ENCODE measurements at regions of chr9 and their contacts with region 1.

Region 1: DNA sequence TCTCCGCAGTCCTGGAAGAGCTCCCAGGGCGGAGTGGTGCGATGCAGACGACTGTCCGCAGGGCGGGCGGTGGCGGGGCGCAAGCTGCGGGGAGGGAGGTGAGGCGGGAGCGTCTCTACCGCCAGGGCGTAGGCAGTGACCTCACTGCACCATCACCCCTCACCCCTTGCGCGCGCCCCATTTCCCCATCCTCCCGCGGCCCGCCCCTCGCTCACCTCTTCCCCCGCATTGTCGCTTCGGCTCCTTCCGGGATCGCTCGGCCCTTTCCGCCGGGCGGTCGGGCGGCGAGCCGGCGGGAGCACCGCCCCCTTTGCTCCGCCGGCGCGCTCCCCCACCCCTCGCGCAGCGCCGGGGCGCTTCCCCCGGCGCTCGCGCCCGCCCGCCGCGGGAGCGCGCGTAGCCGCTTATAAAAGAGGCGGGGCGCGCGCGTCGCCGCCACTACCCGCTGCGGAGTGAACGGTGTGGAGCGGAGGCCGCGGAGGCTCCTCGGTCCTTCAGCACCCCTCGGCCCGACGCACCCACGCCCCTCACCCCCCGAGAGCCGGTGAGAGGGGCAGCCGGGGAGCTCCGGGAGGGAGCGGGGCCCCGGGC is at the start of gene SPTAN1:
- DNase-seq: peak; percentile 96
- ATAC-seq: peak; percentile 81
- H3K4me3 Mint-ChIP-seq: peak within 1 kb of the TSS; percentile 94
- H3K27ac Mint-ChIP-seq: peak within 1 kb of the TSS; percentile 94
- H3K4me1 Mint-ChIP-seq: peaks cover 20% of the 10 kb centered on the region
- H3K27me3 Mint-ChIP-seq: no peaks in the 10 kb centered on the region
- total RNA-seq, gene SPTAN1: 292 to 303 TPM

Region 2: GRCh38 chr9:128504485-128505413 is 47.5 kb before region 1 on chr9 and contains the start of gene GLE1:
- CTCF ChIA-PET with region 1: interaction called, 4 read pairs
- POLR2A ChIA-PET with region 1: interaction called, 38 read pairs
- DNase-seq: peak; percentile 97
- ATAC-seq: peak; percentile 93
- H3K4me3 Mint-ChIP-seq: peak within 1 kb of the TSS; percentile 100
- H3K27ac Mint-ChIP-seq: peak within 1 kb of the TSS; percentile 99
- H3K4me1 Mint-ChIP-seq: peaks cover 19% of the 10 kb centered on the region
- H3K27me3 Mint-ChIP-seq: no peaks in the 10 kb centered on the region
- total RNA-seq, gene GLE1: 46.5 to 47.7 TPM

Region 3: GRCh38 chr9:128512820-128513219 is 39.4 kb before region 1 on chr9:
- CTCF ChIA-PET with region 1: interaction called, 4 read pairs
- POLR2A ChIA-PET with region 1: interaction called, 10 read pairs
- DNase-seq: no peak
- ATAC-seq: no peak
- H3K4me3 Mint-ChIP-seq: no peak overlapping the region
- H3K27ac Mint-ChIP-seq: no peak overlapping the region
- H3K4me1 Mint-ChIP-seq: peaks cover 17% of the 10 kb centered on the region
- H3K27me3 Mint-ChIP-seq: no peaks in the 10 kb centered on the region

Region 4: GRCh38 chr9:128532581-128532980 is 19.7 kb before region 1 on chr9:
- CTCF ChIA-PET with region 1: no interaction called
- POLR2A ChIA-PET with region 1: interaction called, 15 read pairs
- DNase-seq: no peak
- ATAC-seq: no peak
- H3K4me3 Mint-ChIP-seq: no peak overlapping the region
- H3K27ac Mint-ChIP-seq: peak overlapping the region; percentile 5
- H3K4me1 Mint-ChIP-seq: no peaks in the 10 kb centered on the region
- H3K27me3 Mint-ChIP-seq: no peaks in the 10 kb centered on the region

Region 5: GRCh38 chr9:128540634-128541360 is 11.5 kb before region 1 on chr9:
- CTCF ChIA-PET with region 1: interaction called, 13 read pairs
- POLR2A ChIA-PET with region 1: interaction called, 17 read pairs
- DNase-seq: no peak
- ATAC-seq: no peak
- H3K4me3 Mint-ChIP-seq: no peak overlapping the region
- H3K27ac Mint-ChIP-seq: no peak overlapping the region
- H3K4me1 Mint-ChIP-seq: no peaks in the 10 kb centered on the region
- H3K27me3 Mint-ChIP-seq: no peaks in the 10 kb centered on the region